SK-N-SH (cell line): ENCODE measurements at regions of chr14 and their contacts with region 1.

Region 1: DNA sequence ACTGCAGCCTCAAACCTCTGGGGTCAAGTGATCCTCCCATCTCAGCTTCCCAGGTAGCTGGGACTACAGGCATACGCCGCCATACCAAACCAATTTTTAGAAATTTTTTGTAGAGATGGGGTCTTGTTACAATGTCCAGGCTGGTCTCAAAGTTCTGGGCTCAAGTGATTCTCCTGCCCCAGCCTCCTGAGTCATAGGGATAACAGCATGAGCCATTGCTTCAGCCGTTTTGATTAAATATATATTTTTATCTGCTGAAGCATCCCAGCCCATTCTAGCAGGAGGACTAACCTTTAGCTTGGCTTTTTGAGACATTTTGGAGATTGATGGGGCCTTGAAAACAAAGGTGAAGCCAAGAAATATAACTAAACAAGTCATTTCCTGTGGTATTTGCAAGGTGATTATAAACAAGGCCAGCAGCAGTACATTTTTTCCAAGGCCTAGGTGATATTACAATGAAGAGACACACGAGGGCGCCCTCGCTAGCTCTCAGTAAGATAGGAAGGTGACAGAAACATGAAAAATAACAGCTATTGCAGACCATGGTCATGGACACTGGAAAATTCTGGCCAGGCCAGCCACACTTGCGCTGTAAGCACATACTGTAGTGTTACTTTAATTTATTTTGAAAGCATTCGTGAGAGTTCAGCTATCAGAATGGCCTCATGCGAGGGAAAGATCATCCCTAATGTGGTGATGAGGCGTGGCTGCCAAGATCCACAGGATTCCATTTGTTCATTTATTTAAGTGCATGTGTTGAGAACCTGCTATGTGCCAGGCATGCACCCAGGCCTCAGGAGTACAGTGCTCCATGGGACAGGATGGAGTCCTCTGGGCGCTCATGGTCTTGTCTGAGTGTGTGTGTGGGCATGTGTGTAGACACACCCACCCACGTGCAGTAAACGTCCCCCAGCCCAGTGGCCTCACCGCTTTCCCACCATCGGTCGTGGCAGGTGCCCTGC is 63.5 kb downstream of the DGLUCY start:
- DNase-seq: peak; percentile 67
- H3K4me3 ChIP-seq: no peak overlapping the region; a peak in 1 of 4 replicates
- H3K27ac ChIP-seq: peak overlapping the region in 1 of 2 experiments; percentile 71; a peak in 2 of 4 replicates
- H3K4me1 ChIP-seq: peaks cover 0 to 8% of the 10 kb centered on the region in 2 experiments; a peak in 1 of 4 replicates
- H3K27me3 ChIP-seq: no peaks in the 10 kb centered on the region
- CTCF ChIP-seq: peak; percentile 86
- EP300 ChIP-seq: no peak
- RAD21 ChIP-seq: peak; percentile 96

Region 2: GRCh38 chr14:90903101-90903500 is 274.3 kb before region 1 on chr14:
- CTCF ChIA-PET with region 1: interaction called, 270 read pairs
- POLR2A ChIA-PET with region 1: interaction called, 4 read pairs
- DNase-seq: peak; percentile 69
- H3K4me3 ChIP-seq: no peak overlapping the region
- H3K27ac ChIP-seq: peak overlapping the region in 1 of 2 experiments; percentile 67; a peak in 2 of 4 replicates
- H3K4me1 ChIP-seq: no peaks in the 10 kb centered on the region; a peak in 1 of 4 replicates
- H3K27me3 ChIP-seq: no peaks in the 10 kb centered on the region
- CTCF ChIP-seq: peak; percentile 84
- EP300 ChIP-seq: no peak
- RAD21 ChIP-seq: peak; percentile 93

Region 3: DNA sequence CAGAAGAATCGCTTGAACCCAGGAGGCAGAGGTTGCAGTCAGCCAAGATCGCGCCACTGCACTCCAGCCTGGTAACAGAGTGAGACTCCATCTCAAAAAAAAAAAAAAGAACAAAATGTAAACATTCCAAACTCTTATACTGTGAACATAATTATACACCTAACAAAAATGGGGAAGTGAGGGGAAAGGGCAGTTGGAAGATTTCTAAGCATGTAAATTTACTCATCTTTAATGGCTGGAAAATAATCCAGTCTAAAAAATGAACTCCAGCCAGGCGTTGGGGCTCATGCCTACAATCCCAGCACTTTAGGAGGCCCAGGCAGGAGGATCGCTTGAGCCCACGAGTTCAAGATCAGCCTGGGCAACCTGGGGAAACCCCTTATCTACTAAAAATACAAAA is 105.6 kb before region 1 on chr14:
- CTCF ChIA-PET with region 1: no interaction called
- POLR2A ChIA-PET with region 1: no interaction called
- DNase-seq: no peak
- H3K4me3 ChIP-seq: no peak overlapping the region
- H3K27ac ChIP-seq: no peak overlapping the region
- H3K4me1 ChIP-seq: no peaks in the 10 kb centered on the region
- H3K27me3 ChIP-seq: no peaks in the 10 kb centered on the region
- CTCF ChIP-seq: no peak
- EP300 ChIP-seq: no peak
- RAD21 ChIP-seq: no peak

Region 4: GRCh38 chr14:91149479-91149921 is 27.9 kb before region 1 on chr14:
- CTCF ChIA-PET with region 1: interaction called, 26 read pairs
- POLR2A ChIA-PET with region 1: no interaction called
- DNase-seq: no peak
- H3K4me3 ChIP-seq: no peak overlapping the region
- H3K27ac ChIP-seq: no peak overlapping the region
- H3K4me1 ChIP-seq: peaks cover 2 to 16% of the 10 kb centered on the region in 2 experiments; a peak in 2 of 4 replicates
- H3K27me3 ChIP-seq: no peaks in the 10 kb centered on the region
- CTCF ChIP-seq: no peak
- EP300 ChIP-seq: no peak
- RAD21 ChIP-seq: no peak

Region 5: GRCh38 chr14:91202234-91202974 is 25.1 kb after region 1 on chr14:
- CTCF ChIA-PET with region 1: no interaction called
- POLR2A ChIA-PET with region 1: no interaction called
- DNase-seq: no peak
- H3K4me3 ChIP-seq: no peak overlapping the region
- H3K27ac ChIP-seq: no peak overlapping the region
- H3K4me1 ChIP-seq: no peaks in the 10 kb centered on the region
- H3K27me3 ChIP-seq: no peaks in the 10 kb centered on the region
- CTCF ChIP-seq: no peak
- EP300 ChIP-seq: no peak
- RAD21 ChIP-seq: no peak

Region 6: DNA sequence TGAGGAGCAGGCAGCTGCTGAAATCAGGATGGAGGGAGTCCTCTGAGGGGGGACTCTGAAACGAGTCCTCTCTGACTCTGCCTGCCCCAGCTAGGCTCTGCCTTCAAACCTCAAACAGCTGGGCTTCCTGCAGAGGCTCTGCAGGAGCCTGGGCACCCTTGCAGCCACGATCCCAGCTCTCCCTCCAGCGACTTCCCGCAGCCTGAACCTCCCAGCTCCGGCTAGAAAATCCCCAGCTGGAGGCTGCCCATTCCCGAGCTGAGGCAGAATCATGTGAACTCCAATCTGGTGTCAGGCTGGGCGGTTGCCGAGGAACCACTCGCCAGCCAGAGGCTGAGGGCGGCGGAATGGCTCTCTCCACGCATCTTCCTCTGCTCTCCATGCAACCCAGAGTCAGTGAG is 67.1 kb after region 1 on chr14 and contains the start of gene GPR68:
- CTCF ChIA-PET with region 1: interaction called, 30 read pairs
- POLR2A ChIA-PET with region 1: interaction called, 4 read pairs
- DNase-seq: peak; percentile 79
- H3K4me3 ChIP-seq: peak within 1 kb of the TSS in 1 of 2 experiments; percentile 1; a peak in 1 of 4 replicates
- H3K27ac ChIP-seq: peak within 1 kb of the TSS in 1 of 2 experiments; percentile 83; a peak in 2 of 4 replicates
- H3K4me1 ChIP-seq: peaks cover 7 to 48% of the 10 kb centered on the region in 2 experiments; a peak in 2 of 4 replicates
- H3K27me3 ChIP-seq: no peaks in the 10 kb centered on the region
- CTCF ChIP-seq: no peak
- EP300 ChIP-seq: no peak
- RAD21 ChIP-seq: peak; percentile 22; the same call in 1 of the 2 replicates
- polyA plus RNA-seq, gene GPR68: 0.18 and 0.62 TPM in 2 replicates

Region 7: DNA sequence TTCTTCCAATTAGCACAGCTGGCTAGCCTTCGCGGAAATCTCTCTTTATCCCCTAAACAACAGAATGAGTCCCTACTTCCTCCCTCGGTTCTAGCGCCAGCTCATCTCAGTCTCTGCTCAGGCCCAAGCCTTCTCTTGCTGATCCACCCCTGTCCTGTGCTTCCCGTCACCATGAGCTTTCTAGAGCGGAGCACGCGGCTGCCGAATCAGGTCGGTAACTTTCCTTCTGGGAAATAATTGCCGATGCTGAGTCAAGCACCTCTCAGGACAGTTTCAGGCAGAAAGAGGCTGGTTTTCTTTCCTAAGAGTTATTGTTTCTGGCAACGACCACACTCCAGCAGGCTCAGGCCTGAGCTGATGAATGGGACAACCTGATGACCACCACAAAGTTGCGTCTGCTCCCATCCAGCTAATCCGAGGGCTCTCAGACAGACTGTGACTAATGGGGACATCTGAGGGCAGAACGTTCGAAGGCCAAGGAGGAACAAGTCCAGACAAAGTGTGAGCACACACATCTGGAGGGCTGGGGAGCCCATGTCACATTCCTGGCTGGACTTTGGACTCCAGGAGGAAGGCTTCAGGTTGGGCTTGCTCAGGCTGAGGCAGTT is 80.8 kb after region 1 on chr14:
- CTCF ChIA-PET with region 1: interaction called, 20 read pairs
- POLR2A ChIA-PET with region 1: no interaction called
- DNase-seq: no peak
- H3K4me3 ChIP-seq: no peak overlapping the region
- H3K27ac ChIP-seq: peak overlapping the region in 1 of 2 experiments; percentile 97; a peak in 2 of 4 replicates
- H3K4me1 ChIP-seq: peaks cover 0 to 49% of the 10 kb centered on the region in 2 experiments; a peak in 2 of 4 replicates
- H3K27me3 ChIP-seq: no peaks in the 10 kb centered on the region
- CTCF ChIP-seq: no peak
- EP300 ChIP-seq: no peak
- RAD21 ChIP-seq: no peak

Region 8: GRCh38 chr14:91286530-91286937 is 109.2 kb after region 1 on chr14:
- CTCF ChIA-PET with region 1: interaction called, 391 read pairs
- POLR2A ChIA-PET with region 1: interaction called, 13 read pairs
- DNase-seq: peak; percentile 83
- H3K4me3 ChIP-seq: no peak overlapping the region; a peak in 1 of 4 replicates
- H3K27ac ChIP-seq: peak overlapping the region in 1 of 2 experiments; percentile 99; a peak in 2 of 4 replicates
- H3K4me1 ChIP-seq: peaks cover 20 to 37% of the 10 kb centered on the region in 2 experiments; a peak in 3 of 4 replicates
- H3K27me3 ChIP-seq: no peaks in the 10 kb centered on the region
- CTCF ChIP-seq: peak; percentile 90
- EP300 ChIP-seq: peak in 1 of 2 experiments; percentile 22; a peak in 1 of 4 replicates
- RAD21 ChIP-seq: peak; percentile 97